ENCODE measurements at regions of chr19 and their contacts with region 1.

Region 1: DNA sequence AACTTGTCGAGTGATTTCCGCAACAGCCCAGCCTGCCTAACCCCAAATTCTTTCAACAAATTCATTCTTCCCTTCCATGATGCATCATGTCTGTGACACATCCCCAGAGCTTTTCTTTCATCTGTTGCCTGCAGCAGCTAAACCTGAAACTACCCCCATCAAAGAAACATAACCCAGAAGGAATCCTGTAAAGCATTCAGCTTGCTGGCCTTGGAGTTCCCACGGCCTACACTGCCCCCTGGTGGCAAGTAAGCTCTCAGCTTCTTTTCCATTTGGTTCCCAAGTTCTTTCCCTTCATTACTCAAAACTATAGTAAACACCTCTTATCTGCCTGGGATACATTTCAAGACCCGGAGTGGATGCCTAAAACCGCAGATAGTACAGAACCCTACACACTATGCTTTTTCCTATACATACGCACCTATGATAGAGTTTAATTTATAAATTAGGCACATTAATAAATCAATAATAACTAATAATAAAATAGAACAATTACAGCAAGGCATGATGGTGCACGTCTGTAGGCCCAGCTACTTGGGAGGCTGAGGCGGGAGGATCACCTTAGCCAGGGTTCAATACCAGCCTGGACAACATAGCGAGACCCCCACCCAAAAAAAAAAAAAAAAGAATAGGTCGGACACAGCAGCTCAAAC is 7.4 kb downstream of the ETHE1 start:
- DNase-seq: peak; percentile 72
- ATAC-seq: peak; percentile 56
- H3K4me3 ChIP-seq: no peak overlapping the region
- H3K27ac ChIP-seq: no peak overlapping the region
- H3K4me1 ChIP-seq: peaks cover 3% of the 10 kb centered on the region
- H3K27me3 ChIP-seq: no peaks in the 10 kb centered on the region
- CTCF ChIP-seq: peak; percentile 90
- EP300 ChIP-seq: no peak
- POLR2A ChIP-seq: no peak
- RAD21 ChIP-seq: peak; percentile 89

Region 2: DNA sequence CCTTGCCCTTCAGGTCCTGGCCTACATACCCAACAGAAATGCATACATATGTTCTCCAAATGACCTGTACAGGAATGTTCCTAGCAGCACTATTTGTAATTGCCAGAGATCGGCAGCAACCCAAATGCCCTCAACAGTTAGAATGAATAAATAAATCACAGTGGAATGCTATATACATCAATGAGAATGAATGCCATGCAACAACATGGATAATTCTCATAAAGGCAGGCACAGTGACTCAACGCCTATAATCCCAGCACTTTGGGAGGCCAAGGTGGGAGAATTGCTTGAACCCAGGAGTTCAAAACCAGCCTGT is 86.2 kb before region 1 on chr19:
- CTCF ChIA-PET with region 1: interaction called, 18 read pairs
- POLR2A ChIA-PET with region 1: no interaction called
- in situ Hi-C with region 1: no loop called
- intact Hi-C with region 1: loop called (anchors 1 kb)
- DNase-seq: no peak
- ATAC-seq: no peak
- H3K4me3 ChIP-seq: no peak overlapping the region
- H3K27ac ChIP-seq: no peak overlapping the region
- H3K4me1 ChIP-seq: no peaks in the 10 kb centered on the region
- H3K27me3 ChIP-seq: 0 out of 5 replicates have a peak, but pooled peaks cover 0 to under 1% of the 10 kb centered on the region in 2 experiments
- CTCF ChIP-seq: no peak
- EP300 ChIP-seq: no peak
- POLR2A ChIP-seq: no peak
- RAD21 ChIP-seq: no peak

Region 3: DNA sequence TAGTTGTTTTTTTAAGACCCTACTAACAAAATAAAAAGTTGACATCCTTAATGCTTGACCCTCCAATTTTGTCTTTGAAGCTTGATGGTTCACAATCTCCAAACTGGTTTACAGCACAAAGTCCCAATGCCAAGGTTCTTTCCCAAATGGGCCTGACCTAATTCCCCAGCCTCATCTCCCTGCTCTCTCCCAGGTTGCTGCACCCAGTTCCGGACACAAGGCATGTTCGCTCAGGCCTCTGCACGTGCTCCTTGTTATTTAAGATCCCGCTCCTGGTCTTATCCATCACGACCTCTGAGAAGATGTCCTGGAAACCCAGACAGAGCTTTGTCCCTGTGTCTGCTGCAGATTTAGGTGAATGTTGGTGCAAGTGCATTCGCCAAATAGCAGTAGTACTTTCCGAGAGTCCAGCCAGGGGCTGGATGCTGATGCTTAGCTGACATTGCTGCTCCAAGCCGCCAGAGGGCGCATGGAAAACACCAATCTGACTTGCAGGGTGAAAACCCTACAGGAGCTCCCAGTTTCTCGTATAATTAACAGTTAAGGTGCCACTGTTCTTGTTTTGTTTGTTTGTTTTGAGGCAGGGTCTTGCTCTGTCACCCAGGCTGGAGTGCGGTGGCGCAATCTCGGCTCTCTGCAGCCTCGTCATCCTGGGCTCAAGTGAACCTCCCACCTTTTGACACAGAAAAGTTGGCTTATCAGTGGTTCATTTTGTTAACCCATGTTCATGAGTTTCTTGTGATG is 72.6 kb before region 1 on chr19:
- CTCF ChIA-PET with region 1: interaction called, 109 read pairs
- POLR2A ChIA-PET with region 1: interaction called, 19 read pairs
- in situ Hi-C with region 1: loop called (anchors 5 kb)
- intact Hi-C with region 1: loop called (anchors 1 kb)
- DNase-seq: peak; percentile 65
- ATAC-seq: peak; percentile 89
- H3K4me3 ChIP-seq: no peak overlapping the region
- H3K27ac ChIP-seq: no peak overlapping the region
- H3K4me1 ChIP-seq: peaks cover 9% of the 10 kb centered on the region; the same call in 1 of the 2 replicates
- H3K27me3 ChIP-seq: 0 out of 5 replicates have a peak, but pooled peaks cover 0 to 1% of the 10 kb centered on the region in 2 experiments
- CTCF ChIP-seq: peak; percentile 95
- EP300 ChIP-seq: no peak
- POLR2A ChIP-seq: no peak
- RAD21 ChIP-seq: peak; percentile 93

Measured in HepG2 (cell line).